ENCODE measurements at regions of chr4 and their contacts with region 1.

Region 1: GRCh38 chr4:10403633-10404445 is 53.4 kb downstream of the ZNF518B start:
- DNase-seq: peak in 1 of 10 donors; percentile 14
- H3K4me3 ChIP-seq: no peak overlapping the region
- H3K27ac ChIP-seq: no peak overlapping the region
- H3K27me3 ChIP-seq: peaks cover 0 to 3% (median 0%) of the 10 kb centered on the region in 45 donors
- CTCF ChIP-seq: peak; percentile 44 to 91 (median 70)

Region 2: GRCh38 chr4:10164877-10165283 is 239.0 kb before region 1 on chr4:
- intact Hi-C with region 1: loop called (anchors 1 to 10 kb)
- DNase-seq: peak in 8 of 10 donors; percentile 21 to 65 (median 48)
- H3K4me3 ChIP-seq: no peak overlapping the region
- H3K27ac ChIP-seq: no peak overlapping the region
- H3K27me3 ChIP-seq: no peaks in the 10 kb centered on the region
- CTCF ChIP-seq: peak; percentile 55 to 82 (median 73)

Region 3: GRCh38 chr4:10186228-10187214 is 217.3 kb before region 1 on chr4:
- intact Hi-C with region 1: loop called in 1 of 2 experiments (anchors 2 kb)
- DNase-seq: peak in 1 of 10 donors; percentile 28
- H3K4me3 ChIP-seq: no peak overlapping the region
- H3K27ac ChIP-seq: no peak overlapping the region
- H3K27me3 ChIP-seq: peaks cover 0 to 10% (median 0%) of the 10 kb centered on the region in 45 donors
- CTCF ChIP-seq: peak in 40 of 56 donors; percentile 8 to 62 (median 34)